T-cell (primary cell): ENCODE measurements at regions of chr15 and their contacts with region 1.

Region 1: GRCh38 chr15:92808978-92809879 is 90.9 kb upstream of the CHD2 start:
- DNase-seq: peak; percentile 96 to 99 (median 98)
- ATAC-seq: peak; percentile 83 to 91 (median 84)
- H3K4me3 ChIP-seq: peak overlapping the region; percentile 62 to 94
- H3K4me3 Mint-ChIP-seq: peak overlapping the region; percentile 85 to 91 (median 91)
- H3K27ac ChIP-seq: peak overlapping the region; percentile 100
- H3K27ac Mint-ChIP-seq: peak overlapping the region; percentile 98 to 99
- H3K4me1 ChIP-seq: peaks cover 32 to 56% of the 10 kb centered on the region in 2 experiments
- H3K4me1 Mint-ChIP-seq: peaks cover 44 to 53% (median 51%) of the 10 kb centered on the region in 3 donors
- H3K27me3 ChIP-seq: no peaks in the 10 kb centered on the region
- H3K27me3 Mint-ChIP-seq: no peaks in the 10 kb centered on the region

Region 2: DNA sequence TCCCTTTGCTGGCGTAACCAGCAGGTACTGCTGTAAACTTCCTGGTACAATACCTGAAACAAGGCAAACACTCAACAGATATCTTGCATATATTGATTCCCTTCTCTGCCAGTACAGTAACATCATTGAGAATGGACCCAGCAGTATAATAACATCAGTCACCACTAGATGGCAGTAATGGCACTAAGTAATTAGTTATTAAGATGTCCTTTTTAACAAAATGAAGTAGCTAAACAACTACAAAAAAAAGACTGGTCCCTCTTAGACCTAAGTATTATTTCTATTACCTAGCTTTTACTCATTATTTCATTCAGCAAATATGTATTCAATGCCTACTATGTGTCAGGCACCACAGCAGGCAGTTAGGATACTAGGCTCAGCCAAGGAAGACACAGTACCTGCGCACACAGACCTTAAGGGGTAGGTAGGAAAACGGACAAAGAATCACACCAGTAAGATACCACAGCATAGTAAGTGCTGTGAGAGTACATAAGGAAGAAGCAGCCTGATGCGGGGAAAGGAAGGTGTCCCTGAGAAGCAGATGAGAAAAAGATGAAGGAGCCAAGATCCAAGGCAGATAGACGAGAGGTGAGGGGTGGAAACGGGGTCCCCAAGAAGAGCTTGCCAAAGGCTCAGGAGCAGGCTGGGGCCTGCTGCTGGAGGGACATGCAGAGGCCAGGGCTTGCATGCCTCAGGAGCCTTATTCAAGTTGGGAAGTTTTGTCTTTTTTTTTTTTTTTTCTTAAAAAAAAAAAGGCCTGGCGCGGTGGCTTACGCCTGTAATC is 11.9 kb before region 1 on chr15:
- CTCF ChIA-PET with region 1: interaction called, 4 to 42 read pairs
- POLR2A ChIA-PET with region 1: interaction called in 1 of 2 experiments, 4 read pairs
- DNase-seq: peak in 11 of 35 experiments; percentile 9 to 90 (median 30)
- ATAC-seq: peak; percentile 74 to 87 (median 86)
- H3K4me3 ChIP-seq: no peak overlapping the region
- H3K4me3 Mint-ChIP-seq: no peak overlapping the region
- H3K27ac ChIP-seq: no peak overlapping the region
- H3K27ac Mint-ChIP-seq: peak overlapping the region; percentile 56 to 87
- H3K4me1 ChIP-seq: no peaks in the 10 kb centered on the region
- H3K4me1 Mint-ChIP-seq: peaks cover 5 to 10% (median 6%) of the 10 kb centered on the region in 3 donors
- H3K27me3 ChIP-seq: no peaks in the 10 kb centered on the region
- H3K27me3 Mint-ChIP-seq: no peaks in the 10 kb centered on the region

Region 3: GRCh38 chr15:92820236-92821021 is 11.2 kb after region 1 on chr15:
- CTCF ChIA-PET with region 1: interaction called in 1 of 2 experiments, 16 read pairs
- POLR2A ChIA-PET with region 1: interaction called in 1 of 2 experiments, 11 read pairs
- DNase-seq: peak; percentile 64 to 93 (median 78)
- ATAC-seq: peak; percentile 84 to 92 (median 89)
- H3K4me3 ChIP-seq: peak overlapping the region; percentile 49 to 67
- H3K4me3 Mint-ChIP-seq: peak overlapping the region; percentile 86 to 91 (median 88)
- H3K27ac ChIP-seq: peak overlapping the region; percentile 93
- H3K27ac Mint-ChIP-seq: peak overlapping the region; percentile 89 to 94
- H3K4me1 ChIP-seq: peaks cover 41 to 44% of the 10 kb centered on the region in 2 experiments
- H3K4me1 Mint-ChIP-seq: peaks cover 59 to 67% (median 61%) of the 10 kb centered on the region in 3 donors
- H3K27me3 ChIP-seq: no peaks in the 10 kb centered on the region
- H3K27me3 Mint-ChIP-seq: no peaks in the 10 kb centered on the region

Region 4: DNA sequence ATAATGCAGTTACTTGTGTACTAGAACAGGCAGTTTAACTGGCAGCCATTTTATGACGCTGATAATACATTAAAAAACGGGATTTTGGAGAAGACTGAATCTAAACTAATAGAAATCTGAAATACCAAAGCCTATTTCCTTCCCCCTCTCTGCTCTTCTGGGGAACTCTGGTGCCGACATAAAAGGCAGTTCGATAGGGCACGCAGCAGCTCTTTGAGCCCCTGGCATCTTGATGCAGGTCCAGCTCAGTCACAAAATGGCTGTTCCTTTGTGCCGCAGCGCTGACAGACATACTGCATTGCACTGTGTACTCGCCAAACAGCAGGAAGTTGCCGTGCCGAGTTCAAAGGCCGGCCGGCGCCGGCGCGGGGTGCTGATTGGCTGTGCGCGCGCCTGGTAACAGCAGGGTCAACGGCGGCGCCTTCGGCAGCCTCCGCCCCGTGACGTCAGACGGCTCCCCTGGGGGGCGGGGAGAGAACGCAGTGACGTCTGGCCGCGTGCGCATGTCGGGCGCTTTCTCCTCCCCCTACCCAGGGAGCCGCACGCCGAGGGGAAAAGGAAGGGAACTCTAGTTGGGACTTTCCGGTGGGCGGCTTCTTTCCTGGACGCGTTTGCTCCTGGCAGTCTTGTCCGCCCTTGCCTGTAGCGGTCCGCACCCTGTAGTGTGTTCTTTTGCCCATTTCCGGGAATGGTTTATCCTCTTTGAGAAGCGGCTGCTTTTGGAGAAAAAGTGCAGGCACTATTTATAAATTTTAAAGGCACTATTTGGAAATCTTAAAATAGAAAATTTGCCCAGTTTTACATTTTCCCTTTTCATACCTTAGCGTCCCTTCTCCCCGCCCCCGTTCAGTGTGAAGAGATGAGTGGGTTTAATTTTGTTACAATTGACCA is 95.0 kb after region 1 on chr15:
- CTCF ChIA-PET with region 1: interaction called in 1 of 2 experiments, 11 read pairs
- POLR2A ChIA-PET with region 1: interaction called, 7 to 8 read pairs
- DNase-seq: peak; percentile 96 to 100 (median 99)
- ATAC-seq: peak; percentile 84 to 89 (median 87)
- H3K4me3 ChIP-seq: peak overlapping the region; percentile 87 to 88
- H3K4me3 Mint-ChIP-seq: peak overlapping the region; percentile 93 to 99 (median 99)
- H3K27ac ChIP-seq: peak overlapping the region; percentile 96
- H3K27ac Mint-ChIP-seq: peak overlapping the region; percentile 100
- H3K4me1 ChIP-seq: peaks cover 22 to 59% of the 10 kb centered on the region in 2 experiments
- H3K4me1 Mint-ChIP-seq: peaks cover 62 to 82% (median 68%) of the 10 kb centered on the region in 3 donors
- H3K27me3 ChIP-seq: no peaks in the 10 kb centered on the region
- H3K27me3 Mint-ChIP-seq: no peaks in the 10 kb centered on the region

Region 5: GRCh38 chr15:92917606-92918407 is 108.6 kb after region 1 on chr15:
- CTCF ChIA-PET with region 1: interaction called, 4 to 25 read pairs
- POLR2A ChIA-PET with region 1: interaction called, 5 to 11 read pairs
- DNase-seq: peak; percentile 77 to 97 (median 89)
- ATAC-seq: peak; percentile 32 to 41 (median 36)
- H3K4me3 ChIP-seq: no peak overlapping the region
- H3K4me3 Mint-ChIP-seq: peak overlapping the region; percentile 7 to 74 (median 29)
- H3K27ac ChIP-seq: peak overlapping the region; percentile 93
- H3K27ac Mint-ChIP-seq: peak overlapping the region; percentile 95 to 96
- H3K4me1 ChIP-seq: peaks cover 69 to 75% of the 10 kb centered on the region in 2 experiments
- H3K4me1 Mint-ChIP-seq: peaks cover 86 to 89% (median 89%) of the 10 kb centered on the region in 3 donors
- H3K27me3 ChIP-seq: no peaks in the 10 kb centered on the region
- H3K27me3 Mint-ChIP-seq: no peaks in the 10 kb centered on the region

Region 6: DNA sequence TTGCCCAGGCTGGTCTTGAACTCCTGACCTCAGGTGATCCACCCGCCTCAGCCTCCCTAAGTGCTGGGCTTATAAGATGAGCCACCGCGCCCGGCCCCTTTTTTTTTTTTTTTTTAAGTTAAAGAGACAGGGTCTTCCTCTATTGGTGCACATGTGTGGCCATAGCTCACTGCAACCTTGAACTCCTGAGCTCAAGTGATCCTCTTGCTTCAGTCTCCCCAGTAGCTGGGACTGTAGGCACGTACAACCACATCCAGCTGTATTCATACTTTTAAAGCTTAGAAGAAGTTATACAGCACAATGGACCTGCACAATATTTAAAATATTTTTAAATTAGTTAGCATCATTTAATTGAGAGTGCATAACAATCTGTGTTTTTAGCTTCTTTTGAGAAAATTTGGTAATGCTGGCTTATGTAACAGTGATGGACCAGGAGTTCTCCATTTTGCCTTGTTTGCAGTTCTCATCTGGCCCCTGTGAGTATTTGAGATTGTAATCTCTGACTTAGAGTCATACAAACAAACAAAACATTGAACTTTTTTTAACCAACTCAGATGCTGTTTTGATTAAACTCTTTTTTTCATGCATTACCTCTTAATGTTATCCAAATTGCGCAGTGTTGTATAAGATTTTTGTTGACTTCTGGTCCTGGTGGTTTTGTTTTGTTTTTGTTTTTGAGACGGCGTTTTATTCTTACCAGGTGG is 123.9 kb after region 1 on chr15:
- CTCF ChIA-PET with region 1: no interaction called
- POLR2A ChIA-PET with region 1: interaction called in 1 of 2 experiments, 14 read pairs
- DNase-seq: no peak
- ATAC-seq: no peak
- H3K4me3 ChIP-seq: no peak overlapping the region
- H3K4me3 Mint-ChIP-seq: no peak overlapping the region
- H3K27ac ChIP-seq: no peak overlapping the region
- H3K27ac Mint-ChIP-seq: peak overlapping the region in 1 of 2 donors; percentile 11
- H3K4me1 ChIP-seq: peaks cover 9 to 14% of the 10 kb centered on the region in 2 experiments
- H3K4me1 Mint-ChIP-seq: peaks cover 63 to 67% (median 64%) of the 10 kb centered on the region in 3 donors
- H3K27me3 ChIP-seq: no peaks in the 10 kb centered on the region
- H3K27me3 Mint-ChIP-seq: no peaks in the 10 kb centered on the region